BJ (cell line): ENCODE measurements at regions of chr6 and their contacts with region 1.

Region 1: GRCh38 chr6:24581084-24581669 is 64.8 kb downstream of the KIAA0319 start:
- DNase-seq: no peak
- H3K4me3 ChIP-seq: no peak overlapping the region
- H3K27me3 ChIP-seq: no peaks in the 10 kb centered on the region
- CTCF ChIP-seq: peak; percentile 90

Region 2: GRCh38 chr6:24332306-24332705 is 248.9 kb before region 1 on chr6:
- CTCF ChIA-PET with region 1: no interaction called
- POLR2A ChIA-PET with region 1: no interaction called
- DNase-seq: no peak
- H3K4me3 ChIP-seq: no peak overlapping the region
- H3K27me3 ChIP-seq: no peaks in the 10 kb centered on the region
- CTCF ChIP-seq: no peak

Region 3: DNA sequence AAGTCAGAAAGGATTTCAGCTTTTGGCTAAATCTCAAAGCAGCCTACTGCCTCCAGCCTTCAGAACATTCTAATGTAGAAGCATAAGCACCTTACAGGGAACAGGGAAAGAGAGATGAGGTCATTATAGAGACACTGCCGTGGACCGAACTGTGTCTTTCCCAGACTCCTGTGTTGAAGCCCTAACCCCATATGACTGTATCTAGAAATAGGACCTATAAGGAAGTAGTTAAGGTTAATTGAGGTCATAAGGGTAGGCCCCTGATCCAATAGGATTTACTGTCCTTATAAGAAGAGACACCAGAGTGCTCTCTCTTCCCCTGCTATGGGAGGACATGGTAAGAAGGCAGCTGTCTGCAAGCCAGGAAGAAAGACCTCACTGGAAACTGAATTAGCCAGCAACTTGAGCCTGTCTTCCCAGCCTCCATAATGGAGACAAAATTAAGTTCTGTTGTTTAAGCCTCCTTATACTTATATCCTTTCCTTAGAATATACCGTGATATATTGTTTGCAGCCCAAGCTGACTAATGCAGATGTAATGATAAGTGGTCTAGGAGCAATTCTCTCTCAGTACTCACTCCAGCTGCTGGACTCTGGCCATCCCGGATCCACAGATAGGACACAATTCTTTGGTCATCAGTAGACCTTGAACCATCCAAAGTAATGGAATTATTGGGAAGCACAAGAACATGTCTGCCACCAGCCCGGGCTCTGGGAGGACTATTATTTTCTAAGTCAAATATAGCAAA is 15.0 kb before region 1 on chr6:
- CTCF ChIA-PET with region 1: interaction called, 49 read pairs
- POLR2A ChIA-PET with region 1: no interaction called
- DNase-seq: no peak
- H3K4me3 ChIP-seq: no peak overlapping the region
- H3K27me3 ChIP-seq: no peaks in the 10 kb centered on the region; the same call in none of the 2 replicates
- CTCF ChIP-seq: no peak

Region 4: DNA sequence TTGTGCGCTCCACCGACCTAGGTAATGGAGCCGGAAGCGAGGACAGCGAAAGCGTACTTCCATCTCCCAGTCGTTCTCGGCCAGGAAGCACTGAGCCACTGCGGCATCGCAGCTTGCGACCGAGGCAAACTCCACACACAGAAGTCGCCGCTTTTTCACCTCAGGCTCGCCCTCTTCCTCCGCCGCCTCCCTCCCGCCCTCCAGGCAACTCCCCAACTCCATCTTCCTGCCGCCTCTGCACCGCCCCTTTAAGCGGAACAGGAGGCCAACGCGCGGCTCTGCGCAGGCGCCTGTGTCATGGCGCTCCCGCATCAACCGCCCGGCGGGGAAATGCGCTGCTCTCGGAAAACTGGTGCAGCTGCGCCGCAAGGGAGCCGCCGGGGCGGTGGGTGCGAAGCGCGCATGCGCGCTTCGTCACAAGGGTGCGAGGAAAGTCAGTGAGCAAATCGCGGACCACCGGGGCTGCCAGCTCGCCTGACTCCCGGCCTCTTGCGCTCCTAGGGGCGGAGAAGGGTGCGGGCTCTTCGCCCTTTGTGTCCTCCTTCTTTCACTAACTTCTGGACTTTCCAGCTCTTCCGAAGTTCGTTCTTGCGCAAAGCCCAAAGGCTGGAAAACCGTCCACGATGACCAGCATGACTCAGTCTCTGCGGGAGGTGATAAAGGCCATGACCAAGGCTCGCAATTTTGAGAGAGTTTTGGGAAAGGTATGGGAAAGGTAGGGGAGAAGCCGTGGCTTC is 85.6 kb after region 1 on chr6 and contains the starts of genes ACOT13 and TDP2:
- CTCF ChIA-PET with region 1: interaction called, 10 read pairs
- POLR2A ChIA-PET with region 1: no interaction called
- DNase-seq: peak; percentile 80
- H3K4me3 ChIP-seq: peak within 1 kb of the TSS; percentile 94
- H3K27me3 ChIP-seq: no peaks in the 10 kb centered on the region
- CTCF ChIP-seq: peak; percentile 66
- polyA plus RNA-seq, gene ACOT13: 9.9 and 20.3 TPM in 2 replicates
- polyA plus RNA-seq, gene TDP2: 16.8 and 28.2 TPM in 2 replicates

Region 5: GRCh38 chr6:24702720-24703282 is 121.6 kb after region 1 on chr6:
- CTCF ChIA-PET with region 1: interaction called, 110 read pairs
- POLR2A ChIA-PET with region 1: no interaction called
- DNase-seq: no peak
- H3K4me3 ChIP-seq: no peak overlapping the region
- H3K27me3 ChIP-seq: no peaks in the 10 kb centered on the region
- CTCF ChIP-seq: no peak

Region 6: DNA sequence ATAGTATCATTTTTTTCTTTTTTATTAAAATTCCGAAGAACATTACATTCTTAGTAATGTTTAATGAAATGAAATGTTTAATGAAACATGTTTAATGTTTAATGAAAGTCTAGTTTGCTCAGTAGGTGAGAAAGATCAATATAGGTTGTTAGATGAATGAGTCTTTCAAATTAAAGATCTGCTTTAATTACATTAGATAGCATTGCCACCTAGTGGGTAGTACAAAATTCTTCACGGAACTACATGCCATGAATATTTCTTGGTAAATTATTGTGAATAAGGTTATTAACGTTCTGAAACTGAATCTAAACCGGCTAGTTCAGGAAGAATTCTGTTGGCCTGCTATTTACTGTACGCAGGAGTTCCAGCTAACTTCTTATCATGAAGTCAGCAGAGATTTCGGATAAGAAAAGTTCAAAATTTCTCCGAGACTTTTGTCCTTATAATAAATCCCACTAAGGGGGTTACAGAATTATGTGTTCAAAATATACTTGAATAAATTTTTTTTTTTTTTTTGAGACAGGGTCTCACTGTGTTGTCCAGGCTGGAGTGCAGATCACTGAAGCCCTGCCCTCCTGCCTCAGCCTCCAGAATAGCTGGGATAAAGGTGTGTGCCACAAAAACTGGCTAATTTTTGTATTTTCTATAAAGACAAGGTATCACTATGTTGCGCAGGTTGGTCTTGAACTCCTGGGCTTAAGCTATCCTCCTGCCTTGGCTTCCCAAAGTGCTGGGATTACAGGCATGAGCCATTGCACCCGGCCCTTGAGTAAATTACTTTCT is 185.7 kb after region 1 on chr6:
- CTCF ChIA-PET with region 1: interaction called, 61 read pairs
- POLR2A ChIA-PET with region 1: no interaction called
- DNase-seq: no peak
- H3K4me3 ChIP-seq: no peak overlapping the region
- H3K27me3 ChIP-seq: no peaks in the 10 kb centered on the region
- CTCF ChIP-seq: peak; percentile 30; the same call in 1 of the 2 replicates